ENCODE measurements at regions of chr3 and their contacts with region 1.

Region 1: GRCh38 chr3:106824856-106825255 is 552.4 kb upstream of the CCDC54 start:
- DNase-seq: peak; percentile 8
- ATAC-seq: no peak
- H3K4me3 Mint-ChIP-seq: no peak overlapping the region
- H3K27ac Mint-ChIP-seq: no peak overlapping the region
- H3K4me1 Mint-ChIP-seq: no peaks in the 10 kb centered on the region
- H3K27me3 Mint-ChIP-seq: no peaks in the 10 kb centered on the region

Region 2: GRCh38 chr3:107064445-107065060 is 239.7 kb after region 1 on chr3:
- CTCF ChIA-PET with region 1: no interaction called
- POLR2A ChIA-PET with region 1: no interaction called
- intact Hi-C with region 1: loop called (anchors 2 to 5 kb)
- DNase-seq: peak; percentile 80
- ATAC-seq: peak; percentile 85
- H3K4me3 Mint-ChIP-seq: no peak overlapping the region
- H3K27ac Mint-ChIP-seq: no peak overlapping the region
- H3K4me1 Mint-ChIP-seq: peaks cover 19% of the 10 kb centered on the region
- H3K27me3 Mint-ChIP-seq: peaks cover 8% of the 10 kb centered on the region